Endothelial cell of umbilical vein (primary cell): ENCODE measurements at regions of chr4 and their contacts with region 1.

Region 1: GRCh38 chr4:37452952-37453280 is 208.4 kb downstream of the NWD2 start:
- DNase-seq: peak; percentile 68
- H3K4me3 ChIP-seq: no peak overlapping the region
- H3K27ac ChIP-seq: no peak overlapping the region
- H3K4me1 ChIP-seq: peaks cover 9% of the 10 kb centered on the region
- H3K27me3 ChIP-seq: peaks cover 28 to 36% of the 10 kb centered on the region in 2 experiments
- CTCF ChIP-seq: peak; percentile 36 to 54
- POLR2A ChIP-seq: no peak

Region 2: DNA sequence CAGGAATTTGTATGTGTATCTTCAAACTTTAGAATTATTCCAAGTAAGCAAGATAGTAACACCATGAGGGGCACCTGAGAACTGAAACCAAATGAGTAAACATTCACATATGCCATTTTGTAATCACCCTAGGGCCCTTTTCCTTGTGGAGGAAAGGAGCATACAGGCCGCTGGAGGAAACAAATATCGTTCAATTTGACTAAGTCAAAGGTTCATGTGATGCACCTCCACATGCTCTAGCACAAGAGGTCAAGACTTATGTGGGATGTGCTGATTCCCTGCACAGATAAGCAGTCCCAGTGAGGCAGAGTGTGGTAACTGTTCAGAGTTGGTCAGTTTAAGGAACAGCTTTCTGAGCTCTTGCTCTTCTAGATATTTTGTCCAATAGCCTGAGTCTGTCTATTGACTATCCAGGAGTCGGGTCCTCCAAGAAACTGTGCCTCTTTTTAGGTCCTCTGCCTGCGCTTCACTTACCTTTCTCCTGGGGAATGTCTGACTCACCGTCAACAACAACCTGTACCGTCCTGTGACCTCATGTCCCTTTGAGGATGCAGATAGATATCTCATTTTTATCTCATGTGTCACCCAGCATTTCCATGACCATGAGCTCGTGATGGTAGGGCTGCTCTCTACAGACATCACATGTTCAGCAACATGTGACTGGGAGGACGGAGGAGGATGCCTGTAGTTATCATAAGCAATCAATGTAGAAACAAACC is 11.5 kb before region 1 on chr4:
- CTCF ChIA-PET with region 1: interaction called, 23 read pairs
- POLR2A ChIA-PET with region 1: no interaction called
- dilution Hi-C with region 1: no loop called
- intact Hi-C with region 1: no loop called
- DNase-seq: no peak
- H3K4me3 ChIP-seq: no peak overlapping the region
- H3K27ac ChIP-seq: no peak overlapping the region
- H3K4me1 ChIP-seq: no peaks in the 10 kb centered on the region
- H3K27me3 ChIP-seq: peaks cover 0 to 2% of the 10 kb centered on the region in 2 experiments
- CTCF ChIP-seq: no peak
- POLR2A ChIP-seq: no peak

Region 3: DNA sequence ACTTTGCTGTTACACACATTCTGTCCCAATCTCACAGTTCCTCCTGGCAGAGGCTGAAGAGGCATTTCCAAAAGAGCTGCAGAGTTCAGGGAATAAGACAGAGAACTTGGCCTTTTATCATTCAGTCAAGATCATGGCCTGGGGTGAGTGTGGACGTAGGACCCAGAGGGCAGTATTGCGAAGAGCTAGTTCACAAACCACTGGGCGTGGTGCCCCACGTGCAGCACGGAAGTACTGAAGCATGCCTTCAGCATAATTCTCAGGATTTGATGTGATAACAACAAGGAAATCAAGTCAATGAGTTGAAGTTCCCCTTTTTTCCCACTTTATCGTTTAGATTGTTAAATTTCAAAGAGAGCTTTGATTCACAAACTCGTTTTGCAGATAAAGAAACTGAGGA is 115.6 kb after region 1 on chr4:
- CTCF ChIA-PET with region 1: interaction called, 181 read pairs
- POLR2A ChIA-PET with region 1: no interaction called
- dilution Hi-C with region 1: no loop called
- intact Hi-C with region 1: loop called (anchors 1 kb)
- DNase-seq: no peak
- H3K4me3 ChIP-seq: no peak overlapping the region
- H3K27ac ChIP-seq: no peak overlapping the region
- H3K4me1 ChIP-seq: no peaks in the 10 kb centered on the region
- H3K27me3 ChIP-seq: no peaks in the 10 kb centered on the region
- CTCF ChIP-seq: no peak
- POLR2A ChIP-seq: no peak

Region 4: DNA sequence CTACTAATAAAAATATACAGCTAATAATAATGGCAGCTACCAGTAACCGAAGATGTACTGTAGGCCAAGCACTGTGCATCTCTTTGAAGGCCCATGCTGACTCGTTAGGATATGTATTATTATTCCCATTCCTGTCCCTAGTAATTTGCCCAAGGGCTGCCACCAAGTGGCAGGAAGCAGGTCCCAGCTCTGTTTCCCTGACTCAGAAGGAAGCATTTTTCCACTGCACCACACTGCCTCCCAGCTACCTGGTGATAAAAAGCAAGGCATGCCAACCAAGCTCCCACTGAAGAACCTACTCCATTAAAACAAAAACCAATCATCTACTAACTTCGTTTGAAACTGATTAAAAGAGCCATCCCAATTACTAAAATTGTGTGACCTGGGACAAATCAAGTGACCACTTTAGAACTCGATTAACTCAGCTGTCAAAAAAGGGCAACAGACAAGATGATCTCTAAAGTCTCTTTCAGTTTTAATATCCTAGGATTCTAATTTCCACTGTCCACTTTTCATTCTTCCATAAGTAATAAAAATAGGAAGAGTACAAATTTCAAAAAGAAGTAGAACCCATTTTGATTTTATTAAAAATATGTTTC is 349.3 kb after region 1 on chr4:
- CTCF ChIA-PET with region 1: interaction called, 29 read pairs
- POLR2A ChIA-PET with region 1: no interaction called
- dilution Hi-C with region 1: no loop called
- intact Hi-C with region 1: loop called (anchors 2 kb)
- DNase-seq: peak; percentile 73
- H3K4me3 ChIP-seq: no peak overlapping the region
- H3K27ac ChIP-seq: no peak overlapping the region
- H3K4me1 ChIP-seq: no peaks in the 10 kb centered on the region
- H3K27me3 ChIP-seq: peaks cover 0 to 3% of the 10 kb centered on the region in 2 experiments
- CTCF ChIP-seq: peak; percentile 42 to 51
- POLR2A ChIP-seq: no peak

Region 5: GRCh38 chr4:38034986-38035882 is 582.3 kb after region 1 on chr4:
- CTCF ChIA-PET with region 1: interaction called, 6 read pairs
- POLR2A ChIA-PET with region 1: no interaction called
- dilution Hi-C with region 1: no loop called
- intact Hi-C with region 1: loop called (anchors 1 kb)
- DNase-seq: peak; percentile 68
- H3K4me3 ChIP-seq: no peak overlapping the region
- H3K27ac ChIP-seq: peak overlapping the region; percentile 31
- H3K4me1 ChIP-seq: peaks cover 5% of the 10 kb centered on the region
- H3K27me3 ChIP-seq: no peaks in the 10 kb centered on the region
- CTCF ChIP-seq: peak; percentile 49 to 50
- POLR2A ChIP-seq: no peak